Activated T-helper 2 cell treated with anti-CD3 and anti-CD28 coated beads, Interferon-gamma antibody, Interleukin-2, Interleukin-4, amounts not matched to agents 10 μg/mL and 5 μg/mL and 100 μg/mL, durations not matched to agents 14 hours and 24 hours and 36 hours (primary cell): ENCODE measurements at regions of chr16 and their contacts with region 1.

Region 1: GRCh38 chr16:88785106-88785924 is at the start of gene PIEZO1:
- DNase-seq: peak; percentile 71
- H3K4me3 Mint-ChIP-seq: peak within 1 kb of the TSS; percentile 86
- H3K27ac Mint-ChIP-seq: peak within 1 kb of the TSS; percentile 80
- H3K4me1 Mint-ChIP-seq: peaks cover 40% of the 10 kb centered on the region
- H3K27me3 Mint-ChIP-seq: no peaks in the 10 kb centered on the region
- total RNA-seq, gene PIEZO1: 240 and 255 TPM in 2 replicates

Region 2: GRCh38 chr16:88452482-88453216 is 332.7 kb before region 1 on chr16:
- intact Hi-C with region 1: loop called (anchors 10 kb)
- DNase-seq: peak; percentile 97
- H3K4me3 Mint-ChIP-seq: peak overlapping the region; percentile 81
- H3K27ac Mint-ChIP-seq: peak overlapping the region; percentile 80
- H3K4me1 Mint-ChIP-seq: peaks cover 22% of the 10 kb centered on the region
- H3K27me3 Mint-ChIP-seq: peaks cover 11% of the 10 kb centered on the region

Region 3: GRCh38 chr16:88706288-88706964 is 78.9 kb before region 1 on chr16 and contains the starts of genes CTU2 and RNF166:
- intact Hi-C with region 1: loop called (anchors 1 kb)
- DNase-seq: peak; percentile 89
- H3K4me3 Mint-ChIP-seq: peak within 1 kb of the TSS; percentile 87
- H3K27ac Mint-ChIP-seq: peak within 1 kb of the TSS; percentile 67
- H3K4me1 Mint-ChIP-seq: peaks cover 41% of the 10 kb centered on the region
- H3K27me3 Mint-ChIP-seq: no peaks in the 10 kb centered on the region
- total RNA-seq, gene CTU2: 43.8 and 43.9 TPM in 2 replicates
- total RNA-seq, gene RNF166: 39.9 and 52.1 TPM in 2 replicates

Region 4: GRCh38 chr16:88743693-88744576 is 41.4 kb before region 1 on chr16:
- intact Hi-C with region 1: loop called (anchors 1 kb)
- DNase-seq: peak; percentile 51
- H3K4me3 Mint-ChIP-seq: no peak overlapping the region
- H3K27ac Mint-ChIP-seq: no peak overlapping the region
- H3K4me1 Mint-ChIP-seq: peaks cover 12% of the 10 kb centered on the region
- H3K27me3 Mint-ChIP-seq: no peaks in the 10 kb centered on the region

Region 5: GRCh38 chr16:89490387-89491237 is 705.3 kb after region 1 on chr16 and contains the start of gene ANKRD11:
- intact Hi-C with region 1: loop called (anchors 10 kb)
- DNase-seq: peak; percentile 99
- H3K4me3 Mint-ChIP-seq: peak within 1 kb of the TSS; percentile 87
- H3K27ac Mint-ChIP-seq: peak within 1 kb of the TSS; percentile 89
- H3K4me1 Mint-ChIP-seq: peaks cover 42% of the 10 kb centered on the region
- H3K27me3 Mint-ChIP-seq: no peaks in the 10 kb centered on the region
- total RNA-seq, gene ANKRD11: 142 and 144 TPM in 2 replicates